B cell (primary cell): ENCODE measurements at regions of chr15 and their contacts with region 1.

Region 1: GRCh38 chr15:89750560-89751542 is at the start of gene MESP1:
- DNase-seq: peak; percentile 93
- ATAC-seq: peak; percentile 96
- H3K4me3 ChIP-seq: peak within 1 kb of the TSS in 4 of 5 experiments; percentile 38 to 75 (median 63)
- H3K4me3 Mint-ChIP-seq: peak within 1 kb of the TSS; percentile 84
- H3K27ac ChIP-seq: peak within 1 kb of the TSS in 1 of 2 donors; percentile 39
- H3K27ac Mint-ChIP-seq: peak within 1 kb of the TSS; percentile 53
- H3K4me1 ChIP-seq: peaks cover 11 to 13% of the 10 kb centered on the region in 2 donors
- H3K4me1 Mint-ChIP-seq: peaks cover 6% of the 10 kb centered on the region
- H3K27me3 ChIP-seq: peaks cover 0 to 10% (median 4%) of the 10 kb centered on the region in 4 experiments
- H3K27me3 Mint-ChIP-seq: peaks cover 19% of the 10 kb centered on the region
- CTCF ChIP-seq: peak; percentile 77
- total RNA-seq, gene MESP1: 0.49 and 0.51 TPM in 2 replicates

Region 2: GRCh38 chr15:89740137-89740536 is 10.7 kb before region 1 on chr15:
- CTCF ChIA-PET with region 1: interaction called, 21 read pairs
- POLR2A ChIA-PET with region 1: no interaction called
- intact Hi-C with region 1: no loop called
- DNase-seq: peak; percentile 82
- ATAC-seq: peak; percentile 87
- H3K4me3 ChIP-seq: no peak overlapping the region
- H3K4me3 Mint-ChIP-seq: peak overlapping the region; percentile 41
- H3K27ac ChIP-seq: no peak overlapping the region
- H3K27ac Mint-ChIP-seq: no peak overlapping the region
- H3K4me1 ChIP-seq: peaks cover 0 to 2% of the 10 kb centered on the region in 2 donors
- H3K4me1 Mint-ChIP-seq: peaks cover 3% of the 10 kb centered on the region
- H3K27me3 ChIP-seq: peaks cover 0 to 4% (median 0%) of the 10 kb centered on the region in 4 experiments
- H3K27me3 Mint-ChIP-seq: peaks cover 25% of the 10 kb centered on the region
- CTCF ChIP-seq: peak; percentile 96

Region 3: DNA sequence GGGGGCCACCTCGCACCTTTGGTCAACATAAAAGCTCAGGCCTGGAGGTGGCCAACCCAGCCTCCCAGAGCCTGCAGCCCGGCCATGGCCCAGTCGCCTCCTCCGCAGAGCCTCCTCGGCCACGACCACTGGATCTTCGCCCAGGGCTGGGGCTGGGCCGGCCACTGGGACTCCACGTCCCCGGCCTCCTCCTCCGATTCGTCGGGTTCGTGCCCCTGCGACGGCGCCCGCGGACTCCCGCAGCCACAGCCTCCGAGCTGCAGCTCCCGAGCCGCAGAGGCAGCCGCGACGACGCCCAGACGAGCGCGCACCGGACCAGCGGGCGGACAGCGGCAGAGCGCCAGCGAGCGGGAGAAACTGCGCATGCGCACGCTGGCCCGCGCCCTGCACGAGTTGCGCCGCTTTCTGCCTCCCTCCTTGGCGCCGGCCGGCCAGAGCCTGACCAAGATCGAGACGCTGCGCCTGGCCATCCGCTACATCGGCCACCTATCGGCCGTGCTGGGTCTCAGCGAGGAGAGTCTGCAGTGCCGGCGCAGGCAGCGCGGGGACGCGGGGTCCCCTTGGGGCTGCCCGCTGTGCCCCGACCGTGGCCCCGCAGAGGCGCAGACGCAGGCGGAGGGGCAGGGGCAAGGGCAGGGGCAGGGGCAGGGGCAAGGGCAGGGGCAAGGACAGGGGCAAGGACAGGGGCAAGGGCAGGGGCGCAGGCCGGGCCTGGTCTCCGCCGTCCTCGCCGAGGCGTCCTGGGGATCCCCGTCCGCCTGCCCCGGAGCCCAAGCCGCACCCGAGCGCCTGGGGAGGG is 25.6 kb after region 1 on chr15 and contains the start of gene MESP2:
- CTCF ChIA-PET with region 1: no interaction called
- POLR2A ChIA-PET with region 1: no interaction called
- intact Hi-C with region 1: loop called (anchors 2 kb)
- DNase-seq: peak; percentile 68
- ATAC-seq: peak; percentile 62
- H3K4me3 ChIP-seq: peak within 1 kb of the TSS in 4 of 5 experiments; percentile 21 to 57 (median 50)
- H3K4me3 Mint-ChIP-seq: peak within 1 kb of the TSS; percentile 81
- H3K27ac ChIP-seq: no peak within 1 kb of the TSS
- H3K27ac Mint-ChIP-seq: peak within 1 kb of the TSS; percentile 41
- H3K4me1 ChIP-seq: peaks cover 22 to 27% of the 10 kb centered on the region in 2 donors
- H3K4me1 Mint-ChIP-seq: peaks cover 15% of the 10 kb centered on the region
- H3K27me3 ChIP-seq: peaks cover 0 to 31% (median 9%) of the 10 kb centered on the region in 4 experiments
- H3K27me3 Mint-ChIP-seq: peaks cover 2% of the 10 kb centered on the region
- CTCF ChIP-seq: peak; percentile 24
- total RNA-seq, gene MESP2: not detected in 2 replicates

Region 4: GRCh38 chr15:90114451-90114901 is 363.6 kb after region 1 on chr15:
- CTCF ChIA-PET with region 1: no interaction called
- POLR2A ChIA-PET with region 1: no interaction called
- intact Hi-C with region 1: no loop called
- DNase-seq: no peak
- ATAC-seq: no peak
- H3K4me3 ChIP-seq: no peak overlapping the region
- H3K4me3 Mint-ChIP-seq: no peak overlapping the region
- H3K27ac ChIP-seq: no peak overlapping the region
- H3K27ac Mint-ChIP-seq: no peak overlapping the region
- H3K4me1 ChIP-seq: no peaks in the 10 kb centered on the region
- H3K4me1 Mint-ChIP-seq: no peaks in the 10 kb centered on the region
- H3K27me3 ChIP-seq: no peaks in the 10 kb centered on the region
- H3K27me3 Mint-ChIP-seq: no peaks in the 10 kb centered on the region
- CTCF ChIP-seq: no peak